Activated CD4-positive, alpha-beta T cell treated with anti-CD3 and anti-CD28 coated beads for 36 hours (primary cell): ENCODE measurements at regions of chr3 and their contacts with region 1.

Region 1: DNA sequence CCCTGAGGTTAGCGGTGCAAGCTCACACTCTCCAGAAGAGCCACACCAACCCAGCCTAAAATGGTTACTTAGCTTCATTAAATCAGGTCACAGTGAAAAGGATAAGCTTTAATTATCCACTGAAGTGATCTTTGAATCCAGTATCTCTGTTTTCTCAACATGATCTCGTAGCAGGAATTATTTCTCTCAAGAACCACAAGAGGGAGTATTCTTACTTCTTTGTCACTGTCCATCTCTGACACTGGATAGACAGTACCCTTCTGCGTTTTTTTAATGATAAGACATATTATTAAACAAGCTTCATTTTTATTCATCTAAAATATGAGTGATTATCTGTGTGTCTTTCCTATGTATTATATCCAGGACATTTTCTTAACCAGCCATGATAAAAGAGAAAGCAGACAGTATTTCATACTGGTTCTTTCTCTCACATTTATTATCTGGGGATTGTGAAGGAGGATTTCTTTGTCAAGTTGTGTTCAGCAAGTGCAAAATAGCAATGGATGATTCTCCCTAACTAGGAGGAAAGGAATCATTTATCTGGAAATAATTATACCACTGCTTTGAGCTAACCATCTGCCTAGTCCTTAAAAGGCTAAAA is 105.4 kb upstream of the CCDC54 start:
- DNase-seq: no peak
- ATAC-seq: no peak
- H3K4me3 Mint-ChIP-seq: no peak overlapping the region
- H3K27ac Mint-ChIP-seq: no peak overlapping the region
- H3K4me1 Mint-ChIP-seq: no peaks in the 10 kb centered on the region
- H3K27me3 Mint-ChIP-seq: peaks cover 11% of the 10 kb centered on the region

Region 2: DNA sequence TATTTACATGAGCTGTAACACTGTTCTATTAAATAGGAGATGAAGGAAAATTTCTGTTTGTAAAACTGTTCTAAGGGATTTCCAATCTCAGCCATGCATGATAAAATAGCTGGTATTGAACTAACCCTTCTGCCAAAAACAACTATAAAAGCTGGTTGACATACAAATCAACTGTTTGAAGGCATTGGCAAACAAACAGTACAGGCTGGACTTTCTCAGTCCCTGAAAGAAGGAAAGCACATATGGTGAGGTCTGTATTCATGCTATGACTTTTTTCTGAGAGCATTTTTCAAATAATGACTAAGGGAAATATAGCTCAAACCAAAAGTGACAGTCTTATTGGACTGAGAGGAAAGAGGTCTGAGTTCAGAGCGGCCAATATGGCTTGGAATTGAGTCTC is 11.7 kb before region 1 on chr3:
- CTCF ChIA-PET with region 1: interaction called, 11 read pairs
- POLR2A ChIA-PET with region 1: no interaction called
- intact Hi-C with region 1: no loop called
- DNase-seq: no peak
- ATAC-seq: no peak
- H3K4me3 Mint-ChIP-seq: no peak overlapping the region
- H3K27ac Mint-ChIP-seq: no peak overlapping the region
- H3K4me1 Mint-ChIP-seq: peaks cover 5% of the 10 kb centered on the region
- H3K27me3 Mint-ChIP-seq: peaks cover 8% of the 10 kb centered on the region

Region 3: GRCh38 chr3:107284612-107285011 is 12.7 kb after region 1 on chr3:
- CTCF ChIA-PET with region 1: interaction called, 13 read pairs
- POLR2A ChIA-PET with region 1: no interaction called
- intact Hi-C with region 1: no loop called
- DNase-seq: no peak
- ATAC-seq: no peak
- H3K4me3 Mint-ChIP-seq: no peak overlapping the region
- H3K27ac Mint-ChIP-seq: no peak overlapping the region
- H3K4me1 Mint-ChIP-seq: no peaks in the 10 kb centered on the region
- H3K27me3 Mint-ChIP-seq: peaks cover 8% of the 10 kb centered on the region

Region 4: GRCh38 chr3:107421170-107421792 is 149.4 kb after region 1 on chr3:
- CTCF ChIA-PET with region 1: interaction called, 20 read pairs
- POLR2A ChIA-PET with region 1: no interaction called
- intact Hi-C with region 1: loop called (anchors 1 kb)
- DNase-seq: no peak
- ATAC-seq: peak; percentile 79
- H3K4me3 Mint-ChIP-seq: no peak overlapping the region
- H3K27ac Mint-ChIP-seq: no peak overlapping the region
- H3K4me1 Mint-ChIP-seq: peaks cover 3% of the 10 kb centered on the region
- H3K27me3 Mint-ChIP-seq: peaks cover 7% of the 10 kb centered on the region

Region 5: GRCh38 chr3:107429320-107430181 is 157.7 kb after region 1 on chr3:
- CTCF ChIA-PET with region 1: interaction called, 14 read pairs
- POLR2A ChIA-PET with region 1: no interaction called
- intact Hi-C with region 1: no loop called
- DNase-seq: peak; percentile 77
- ATAC-seq: peak; percentile 74
- H3K4me3 Mint-ChIP-seq: peak overlapping the region; percentile 68
- H3K27ac Mint-ChIP-seq: no peak overlapping the region
- H3K4me1 Mint-ChIP-seq: peaks cover 20% of the 10 kb centered on the region
- H3K27me3 Mint-ChIP-seq: peaks cover 3% of the 10 kb centered on the region

Region 6: GRCh38 chr3:107545680-107546120 is 273.8 kb after region 1 on chr3:
- CTCF ChIA-PET with region 1: no interaction called
- POLR2A ChIA-PET with region 1: no interaction called
- intact Hi-C with region 1: loop called in 1 of 2 experiments (anchors 5 kb)
- DNase-seq: no peak
- ATAC-seq: peak; percentile 44
- H3K4me3 Mint-ChIP-seq: no peak overlapping the region
- H3K27ac Mint-ChIP-seq: no peak overlapping the region
- H3K4me1 Mint-ChIP-seq: peaks cover 18% of the 10 kb centered on the region
- H3K27me3 Mint-ChIP-seq: no peaks in the 10 kb centered on the region